MCF 10A (cell line): ENCODE measurements at regions of chr12 and their contacts with region 1.

Region 1: GRCh38 chr12:12376646-12377448 is 20.0 kb downstream of the BORCS5 start:
- DNase-seq: peak; percentile 76
- H3K4me3 Mint-ChIP-seq: no peak overlapping the region
- H3K27ac Mint-ChIP-seq: no peak overlapping the region
- H3K4me1 Mint-ChIP-seq: no peaks in the 10 kb centered on the region
- H3K27me3 Mint-ChIP-seq: no peaks in the 10 kb centered on the region
- CTCF ChIP-seq: peak; percentile 57

Region 2: GRCh38 chr12:12356886-12357718 is 19.7 kb before region 1 on chr12 and contains the start of gene BORCS5:
- CTCF ChIA-PET with region 1: interaction called, 15 read pairs
- POLR2A ChIA-PET with region 1: interaction called, 14 read pairs
- intact Hi-C with region 1: no loop called
- DNase-seq: peak; percentile 98
- H3K4me3 Mint-ChIP-seq: peak within 1 kb of the TSS; percentile 91
- H3K27ac Mint-ChIP-seq: peak within 1 kb of the TSS; percentile 94
- H3K4me1 Mint-ChIP-seq: no peaks in the 10 kb centered on the region
- H3K27me3 Mint-ChIP-seq: no peaks in the 10 kb centered on the region
- CTCF ChIP-seq: no peak
- total RNA-seq, gene BORCS5: 11.0 and 15.3 TPM in 2 replicates

Region 3: GRCh38 chr12:12611512-12612306 is 234.9 kb after region 1 on chr12 and contains the start of gene CREBL2:
- CTCF ChIA-PET with region 1: interaction called, 4 read pairs
- POLR2A ChIA-PET with region 1: interaction called, 3 read pairs
- intact Hi-C with region 1: loop called (anchors 2 kb)
- DNase-seq: peak; percentile 92
- H3K4me3 Mint-ChIP-seq: peak within 1 kb of the TSS; percentile 95
- H3K27ac Mint-ChIP-seq: peak within 1 kb of the TSS; percentile 98
- H3K4me1 Mint-ChIP-seq: peaks cover 26% of the 10 kb centered on the region
- H3K27me3 Mint-ChIP-seq: no peaks in the 10 kb centered on the region
- CTCF ChIP-seq: no peak
- total RNA-seq, gene CREBL2: 17.4 and 22.5 TPM in 2 replicates

Region 4: DNA sequence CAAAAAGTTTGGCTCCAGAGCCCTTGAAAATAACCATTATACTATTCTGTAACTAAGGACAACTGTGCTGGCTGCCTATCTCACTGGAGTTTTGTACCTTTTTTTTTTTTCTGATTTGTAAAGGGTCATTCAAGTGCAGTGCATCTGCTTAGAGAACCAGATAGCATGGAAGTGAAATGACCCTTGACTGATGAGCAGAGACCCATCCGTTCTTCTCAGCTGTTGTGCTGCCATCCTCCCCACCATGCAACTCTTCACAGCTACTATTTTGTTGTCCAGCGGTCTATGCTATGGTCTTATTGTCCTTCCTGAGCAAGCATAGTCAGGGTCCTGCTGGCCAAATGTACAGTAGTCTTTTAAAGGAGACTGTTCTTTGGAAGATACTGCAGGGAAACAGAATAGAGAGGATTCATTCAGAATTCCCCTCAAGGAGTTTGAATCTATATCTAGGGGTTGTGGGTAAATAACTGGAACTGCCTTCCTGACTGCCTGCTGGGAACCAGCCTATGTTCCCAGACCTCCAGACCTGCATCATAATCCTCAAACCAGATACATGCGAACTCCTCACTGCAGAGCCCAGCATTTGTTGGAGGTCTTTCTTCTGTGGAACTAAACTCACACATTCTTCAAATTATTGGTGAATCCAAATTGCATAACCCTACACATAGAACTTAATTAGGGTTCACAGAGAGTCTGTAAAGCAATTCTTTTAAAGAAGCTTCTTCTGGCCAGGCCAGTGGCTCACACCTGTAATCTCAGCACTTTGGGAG is 278.0 kb after region 1 on chr12:
- CTCF ChIA-PET with region 1: interaction called, 43 read pairs
- POLR2A ChIA-PET with region 1: interaction called, 4 read pairs
- intact Hi-C with region 1: loop called (anchors 1 kb)
- DNase-seq: no peak
- H3K4me3 Mint-ChIP-seq: no peak overlapping the region
- H3K27ac Mint-ChIP-seq: no peak overlapping the region
- H3K4me1 Mint-ChIP-seq: peaks cover 12% of the 10 kb centered on the region
- H3K27me3 Mint-ChIP-seq: no peaks in the 10 kb centered on the region
- CTCF ChIP-seq: no peak

Region 5: GRCh38 chr12:12661086-12661485 is 284.2 kb after region 1 on chr12:
- CTCF ChIA-PET with region 1: interaction called, 43 read pairs
- POLR2A ChIA-PET with region 1: interaction called, 3 read pairs
- intact Hi-C with region 1: loop called (anchors 1 kb)
- DNase-seq: peak; percentile 81
- H3K4me3 Mint-ChIP-seq: peak overlapping the region; percentile 46
- H3K27ac Mint-ChIP-seq: peak overlapping the region; percentile 51
- H3K4me1 Mint-ChIP-seq: peaks cover 24% of the 10 kb centered on the region
- H3K27me3 Mint-ChIP-seq: no peaks in the 10 kb centered on the region
- CTCF ChIP-seq: no peak

Region 6: GRCh38 chr12:12696562-12697383 is 319.9 kb after region 1 on chr12:
- CTCF ChIA-PET with region 1: interaction called, 108 read pairs
- POLR2A ChIA-PET with region 1: interaction called, 5 read pairs
- intact Hi-C with region 1: loop called (anchors 2 kb)
- DNase-seq: peak; percentile 86
- H3K4me3 Mint-ChIP-seq: peak overlapping the region; percentile 88
- H3K27ac Mint-ChIP-seq: peak overlapping the region; percentile 99
- H3K4me1 Mint-ChIP-seq: peaks cover 16% of the 10 kb centered on the region
- H3K27me3 Mint-ChIP-seq: no peaks in the 10 kb centered on the region
- CTCF ChIP-seq: no peak

Region 7: DNA sequence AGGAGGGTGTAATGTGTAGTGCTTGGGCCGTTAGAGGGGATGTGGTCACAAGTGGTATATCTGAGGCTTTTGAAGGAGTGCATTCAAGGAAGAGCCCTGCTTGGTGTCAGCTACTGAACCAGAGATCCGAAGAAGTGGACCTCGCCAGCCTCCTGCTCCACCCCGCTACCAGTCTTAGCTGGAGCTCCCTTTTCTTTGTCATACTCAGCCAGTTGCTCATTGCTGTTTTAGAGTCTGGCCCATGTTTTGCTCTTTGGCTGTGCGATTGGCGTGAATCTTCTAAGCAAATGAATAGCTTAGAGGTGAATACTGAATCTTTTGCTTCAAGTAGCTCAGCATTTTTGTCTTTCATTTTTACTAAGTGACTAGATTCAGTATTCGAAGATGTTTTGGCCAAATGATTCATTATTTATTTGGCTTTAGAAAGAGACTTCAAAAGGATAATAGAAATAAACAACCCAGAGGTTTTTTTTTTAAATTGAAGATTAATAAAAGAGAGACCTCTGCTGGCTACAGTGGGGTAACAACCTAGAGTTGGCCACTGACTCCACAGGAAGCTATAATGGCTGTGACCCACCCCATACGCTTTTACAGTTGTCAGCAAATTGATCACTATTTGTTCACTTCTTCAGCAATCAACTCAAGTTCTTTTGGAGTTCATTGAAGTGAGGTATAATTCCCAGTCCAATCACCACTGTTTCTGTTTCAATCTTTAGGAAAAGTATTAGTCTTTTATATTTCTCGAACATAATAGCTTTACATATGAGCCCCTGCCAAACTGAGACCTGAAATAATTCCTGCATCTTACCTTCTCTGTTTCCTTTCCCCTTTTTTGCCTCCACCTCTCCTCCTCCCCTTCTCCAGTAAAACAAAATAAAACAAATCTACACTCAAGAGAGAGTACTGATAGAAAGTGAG is 360.2 kb after region 1 on chr12:
- CTCF ChIA-PET with region 1: interaction called, 17 read pairs
- POLR2A ChIA-PET with region 1: no interaction called
- intact Hi-C with region 1: loop called (anchors 1 kb)
- DNase-seq: peak; percentile 55
- H3K4me3 Mint-ChIP-seq: no peak overlapping the region
- H3K27ac Mint-ChIP-seq: peak overlapping the region; percentile 71
- H3K4me1 Mint-ChIP-seq: peaks cover 24% of the 10 kb centered on the region
- H3K27me3 Mint-ChIP-seq: no peaks in the 10 kb centered on the region
- CTCF ChIP-seq: peak; percentile 52